ENCODE measurements at regions of chr11 and their contacts with region 1.

Region 1: DNA sequence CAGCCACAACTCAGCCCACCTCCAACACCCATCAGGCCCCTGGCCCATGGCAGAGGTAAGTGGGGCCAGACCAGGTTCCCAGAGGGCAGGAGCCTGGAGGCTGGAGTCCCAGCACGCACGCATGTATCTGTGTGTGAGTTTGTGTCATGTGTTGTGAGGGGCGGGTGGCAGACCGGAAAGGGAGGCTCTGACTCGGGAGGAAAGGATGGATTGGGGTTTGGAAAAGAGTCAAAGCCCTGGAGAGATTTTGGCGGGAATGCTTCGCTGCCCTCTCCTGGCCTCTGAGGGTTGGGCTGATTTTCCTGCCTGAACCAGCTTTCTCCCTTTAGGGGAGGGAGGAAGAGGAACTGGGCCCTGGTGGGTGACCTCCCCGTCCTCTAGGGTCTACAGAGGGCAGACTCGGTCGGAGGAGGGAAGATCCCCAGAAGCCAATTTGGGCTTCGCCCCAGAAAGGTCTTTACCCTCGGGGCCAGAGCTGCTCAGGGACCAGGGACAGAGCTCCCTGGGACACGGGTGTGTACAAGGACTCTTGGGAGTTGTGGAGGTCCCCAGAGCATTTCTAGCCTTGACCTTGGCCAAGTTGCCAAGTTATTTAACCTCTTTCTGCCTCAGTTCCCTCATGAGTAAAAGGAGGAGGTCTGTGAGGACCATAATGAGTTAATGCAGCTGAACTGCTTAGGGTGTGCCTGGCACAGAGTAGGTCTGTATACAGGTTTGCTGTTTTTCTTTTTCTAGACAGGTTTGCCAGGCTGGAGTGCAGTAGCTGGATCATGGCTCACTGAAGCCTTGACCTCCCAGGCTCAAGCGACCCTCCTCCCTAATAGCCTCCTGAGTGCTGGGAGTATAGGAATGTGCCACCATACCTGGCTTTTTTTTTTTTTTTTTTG is 6.9 kb downstream of the C11orf68 start:
- DNase-seq: no peak
- H3K4me3 Mint-ChIP-seq: no peak overlapping the region
- H3K27ac Mint-ChIP-seq: no peak overlapping the region
- H3K4me1 Mint-ChIP-seq: peaks cover 26% of the 10 kb centered on the region
- H3K27me3 Mint-ChIP-seq: peaks cover 2% of the 10 kb centered on the region

Region 2: DNA sequence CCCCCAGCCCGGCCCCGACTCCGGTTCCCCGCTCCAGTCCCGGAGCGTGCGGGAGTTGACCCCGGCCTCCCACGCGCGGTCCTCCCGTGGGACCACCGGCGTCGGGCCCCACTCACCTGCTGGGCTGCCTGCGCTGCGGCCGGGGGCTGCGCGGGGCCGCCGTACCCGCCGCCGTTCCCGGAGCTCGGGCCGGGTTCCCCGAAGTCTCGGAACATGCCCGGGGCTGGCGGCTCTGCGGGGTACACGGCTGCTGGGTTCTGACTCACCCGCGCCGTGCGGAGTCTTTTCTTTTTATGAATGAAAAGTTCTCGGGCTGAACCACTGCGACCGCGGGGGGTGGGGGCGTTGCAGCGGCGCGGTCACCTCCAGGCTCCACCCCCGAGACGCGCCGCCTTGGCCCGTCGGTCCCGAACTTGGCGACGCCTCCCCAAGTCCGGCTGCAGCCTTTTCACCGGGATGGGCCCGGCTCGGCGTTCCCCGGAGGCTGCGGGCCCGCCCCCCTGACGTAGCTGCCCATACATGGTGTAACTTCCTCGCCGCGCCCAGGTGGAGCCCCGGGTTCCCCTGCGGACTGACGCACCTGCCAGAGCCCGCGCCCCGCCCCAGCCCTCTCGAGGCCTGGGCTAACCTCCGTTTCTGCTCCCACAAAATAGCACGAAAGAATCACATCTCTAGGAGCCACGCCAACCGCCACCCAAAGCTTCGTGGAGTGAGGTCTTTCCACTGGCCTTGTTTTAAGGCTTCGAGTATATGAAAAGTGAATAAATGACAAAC is 11.6 kb before region 1 on chr11 and contains the start of gene FOSL1:
- CTCF ChIA-PET with region 1: interaction called, 11 read pairs
- POLR2A ChIA-PET with region 1: no interaction called
- DNase-seq: peak; percentile 93
- H3K4me3 Mint-ChIP-seq: peak within 1 kb of the TSS; percentile 63
- H3K27ac Mint-ChIP-seq: peak within 1 kb of the TSS; percentile 75
- H3K4me1 Mint-ChIP-seq: peaks cover 33% of the 10 kb centered on the region
- H3K27me3 Mint-ChIP-seq: peaks cover 11% of the 10 kb centered on the region
- total RNA-seq, gene FOSL1: 1.7 to 2.0 TPM

Measured in activated CD4-positive, alpha-beta T cell treated with anti-CD3 and anti-CD28 coated beads, Interleukin-2, amount 10 ng/mL, durations not matched to agents 7 days and 5 days (primary cell).